ENCODE measurements at regions of chr11 and their contacts with region 1.

Region 1: DNA sequence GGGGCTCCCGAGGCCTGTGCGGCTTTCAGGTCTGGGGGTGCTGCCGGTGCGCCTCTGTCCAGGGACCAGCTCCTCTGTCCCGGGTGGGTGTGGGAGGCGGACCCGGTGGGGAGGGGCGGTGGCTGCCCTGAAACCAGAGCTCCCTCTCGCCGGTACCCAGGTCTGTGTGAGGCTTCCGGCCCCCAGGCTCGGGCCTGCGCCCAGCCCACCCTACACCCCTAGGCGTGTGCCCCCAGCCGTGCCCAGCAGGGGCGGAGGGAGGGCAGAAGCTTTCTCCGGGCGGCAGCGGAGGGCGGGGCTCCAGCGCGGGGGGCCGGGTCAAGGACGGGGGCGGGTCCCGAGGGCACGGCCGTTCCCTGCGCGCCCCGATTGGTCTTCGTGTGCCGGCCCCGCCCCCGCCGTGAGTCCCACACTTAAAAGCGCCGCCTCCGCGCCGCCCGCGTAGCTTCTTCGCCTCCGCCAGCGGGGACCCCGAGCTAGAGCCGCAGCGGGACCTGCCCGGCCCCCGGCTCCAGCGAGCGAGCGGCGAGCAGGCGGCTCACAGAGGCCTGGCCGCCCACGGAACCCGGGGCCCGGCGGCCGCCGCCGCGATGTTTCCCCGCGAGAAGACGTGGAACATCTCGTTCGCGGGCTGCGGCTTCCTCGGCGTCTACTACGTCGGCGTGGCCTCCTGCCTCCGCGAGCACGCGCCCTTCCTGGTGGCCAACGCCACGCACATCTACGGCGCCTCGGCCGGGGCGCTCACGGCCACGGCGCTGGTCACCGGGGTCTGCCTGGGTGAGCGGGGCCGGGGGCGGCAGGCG is 616 bp downstream of the PNPLA2 start:
- DNase-seq: peak; percentile 86
- H3K4me3 Mint-ChIP-seq: peak overlapping the region; percentile 87
- H3K27ac Mint-ChIP-seq: no peak overlapping the region
- H3K4me1 Mint-ChIP-seq: no peaks in the 10 kb centered on the region
- H3K27me3 Mint-ChIP-seq: no peaks in the 10 kb centered on the region

Region 2: GRCh38 chr11:832321-833113 is 13.2 kb after region 1 on chr11 and contains the start of gene CD151:
- intact Hi-C with region 1: loop called (anchors 1 kb)
- DNase-seq: no peak
- H3K4me3 Mint-ChIP-seq: peak within 1 kb of the TSS; percentile 79
- H3K27ac Mint-ChIP-seq: peak within 1 kb of the TSS; percentile 48
- H3K4me1 Mint-ChIP-seq: peaks cover 5% of the 10 kb centered on the region
- H3K27me3 Mint-ChIP-seq: peaks cover 33% of the 10 kb centered on the region
- total RNA-seq, gene CD151: 80.6 and 82.3 TPM in 2 replicates

Region 3: GRCh38 chr11:842370-843002 is 23.2 kb after region 1 on chr11 and contains the starts of genes POLR2L and TSPAN4:
- intact Hi-C with region 1: loop called (anchors 1 kb)
- DNase-seq: peak; percentile 82
- H3K4me3 Mint-ChIP-seq: peak within 1 kb of the TSS; percentile 89
- H3K27ac Mint-ChIP-seq: peak within 1 kb of the TSS; percentile 73
- H3K4me1 Mint-ChIP-seq: peaks cover 16% of the 10 kb centered on the region
- H3K27me3 Mint-ChIP-seq: peaks cover 2% of the 10 kb centered on the region
- total RNA-seq, gene POLR2L: 114 and 126 TPM in 2 replicates
- total RNA-seq, gene TSPAN4: 12.8 and 13.9 TPM in 2 replicates